ENCODE measurements at regions of chr14 and their contacts with region 1.

Region 1: DNA sequence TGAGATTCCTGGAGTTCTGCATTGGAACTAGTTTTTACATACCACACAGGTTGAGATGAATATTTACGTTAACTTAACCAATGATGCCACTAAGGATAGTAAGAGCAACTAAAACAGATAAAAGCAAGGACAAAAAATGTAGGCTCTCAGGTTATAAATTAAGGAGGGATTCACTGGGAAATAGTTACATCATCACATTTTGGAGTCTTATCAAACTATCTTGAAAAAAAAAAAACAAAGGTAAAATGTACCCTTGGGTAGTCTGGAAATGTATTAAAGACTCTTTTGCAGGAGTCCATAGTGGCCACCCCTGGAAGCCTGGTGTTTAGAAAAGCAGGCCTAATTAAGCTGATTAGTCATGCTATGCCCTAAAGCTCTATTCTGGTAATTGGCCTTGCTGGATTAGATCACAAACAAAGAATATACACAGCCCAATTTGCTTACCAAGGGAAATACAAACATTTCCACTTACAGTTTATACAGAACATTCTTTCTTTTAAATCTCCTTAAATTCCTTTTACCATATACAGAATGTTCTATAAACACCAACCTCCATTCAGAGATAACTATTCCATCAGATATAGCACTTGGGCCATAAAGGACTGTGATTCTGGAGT is 39.3 kb downstream of the SLC25A47 start:
- DNase-seq: no peak
- H3K4me3 ChIP-seq: no peak overlapping the region
- H3K27ac ChIP-seq: no peak overlapping the region
- H3K4me1 ChIP-seq: no peaks in the 10 kb centered on the region
- H3K27me3 ChIP-seq: no peaks in the 10 kb centered on the region
- CTCF ChIP-seq: no peak
- EP300 ChIP-seq: no peak
- POLR2A ChIP-seq: no peak
- RAD21 ChIP-seq: no peak

Region 2: GRCh38 chr14:99968191-99968920 is 394.1 kb before region 1 on chr14:
- CTCF ChIA-PET with region 1: no interaction called
- POLR2A ChIA-PET with region 1: no interaction called
- DNase-seq: no peak
- H3K4me3 ChIP-seq: no peak overlapping the region
- H3K27ac ChIP-seq: no peak overlapping the region
- H3K4me1 ChIP-seq: peaks cover 0 to 12% (median 5%) of the 10 kb centered on the region in 4 experiments; a peak in 6 of 7 replicates
- H3K27me3 ChIP-seq: peaks cover 6 to 22% (median 19%) of the 10 kb centered on the region in 4 experiments
- CTCF ChIP-seq: no peak
- EP300 ChIP-seq: no peak
- POLR2A ChIP-seq: no peak
- RAD21 ChIP-seq: no peak

Region 3: GRCh38 chr14:100341301-100342031 is 21.0 kb before region 1 on chr14:
- CTCF ChIA-PET with region 1: interaction called, 5 read pairs
- POLR2A ChIA-PET with region 1: interaction called, 129 read pairs
- DNase-seq: no peak
- H3K4me3 ChIP-seq: no peak overlapping the region
- H3K27ac ChIP-seq: peak overlapping the region; percentile 34; the same call in 1 of the 2 replicates
- H3K4me1 ChIP-seq: no peaks in the 10 kb centered on the region
- H3K27me3 ChIP-seq: no peaks in the 10 kb centered on the region
- CTCF ChIP-seq: no peak
- EP300 ChIP-seq: no peak
- POLR2A ChIP-seq: no peak
- RAD21 ChIP-seq: no peak

Region 4: GRCh38 chr14:100348784-100349704 is 13.4 kb before region 1 on chr14:
- CTCF ChIA-PET with region 1: interaction called, 13 read pairs
- POLR2A ChIA-PET with region 1: interaction called, 129 read pairs
- DNase-seq: no peak
- H3K4me3 ChIP-seq: no peak overlapping the region
- H3K27ac ChIP-seq: no peak overlapping the region
- H3K4me1 ChIP-seq: no peaks in the 10 kb centered on the region
- H3K27me3 ChIP-seq: no peaks in the 10 kb centered on the region
- CTCF ChIP-seq: no peak
- EP300 ChIP-seq: no peak
- POLR2A ChIP-seq: no peak
- RAD21 ChIP-seq: no peak

Region 5: DNA sequence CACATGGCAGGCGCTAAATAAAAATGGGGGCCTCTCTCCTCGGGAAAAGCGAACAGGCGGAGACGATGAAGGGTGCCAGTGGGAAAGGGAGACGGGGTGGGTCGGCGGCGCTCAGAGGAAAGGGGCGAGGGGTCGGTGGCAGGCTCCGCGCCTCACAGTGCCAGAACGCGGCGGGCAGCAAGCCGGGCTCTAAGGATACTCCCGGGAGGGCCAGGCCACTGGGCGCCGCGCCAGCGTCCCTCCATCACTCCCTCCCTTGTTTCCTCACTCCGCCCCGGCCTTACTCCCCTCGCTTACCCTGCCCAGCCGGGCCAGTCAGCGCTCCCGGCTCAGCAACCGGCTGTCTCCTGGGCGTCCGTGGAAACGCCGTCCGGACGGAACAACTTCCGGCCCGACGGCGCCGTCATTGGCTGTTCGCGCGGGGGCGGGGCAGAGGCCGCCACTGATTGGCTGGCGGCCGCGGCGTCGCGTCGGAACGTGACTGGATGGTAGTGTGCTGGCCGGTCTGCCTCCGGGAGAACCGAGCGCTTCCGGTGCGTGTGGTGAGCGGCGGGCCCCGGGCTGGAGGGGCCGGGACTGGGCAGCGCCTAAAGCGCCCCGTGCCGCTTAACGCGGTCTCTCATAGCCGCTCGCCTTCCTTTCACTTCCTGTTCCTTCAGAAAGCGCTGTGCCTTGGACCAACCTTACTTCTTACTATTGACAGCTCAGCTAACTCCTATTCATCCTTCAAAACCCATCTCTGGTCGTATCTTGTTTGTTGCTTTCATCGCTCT is 13.7 kb after region 1 on chr14:
- CTCF ChIA-PET with region 1: interaction called, 10 read pairs
- POLR2A ChIA-PET with region 1: interaction called, 109 read pairs
- DNase-seq: peak; percentile 89 to 95
- H3K4me3 ChIP-seq: peak within 1 kb of the TSS; percentile 89 to 98 (median 94)
- H3K27ac ChIP-seq: peak within 1 kb of the TSS; percentile 89
- H3K4me1 ChIP-seq: peaks cover 15 to 29% (median 18%) of the 10 kb centered on the region in 4 experiments; a peak in 6 of 7 replicates
- H3K27me3 ChIP-seq: no peaks in the 10 kb centered on the region
- CTCF ChIP-seq: no peak
- EP300 ChIP-seq: no peak
- POLR2A ChIP-seq: peak; percentile 85 to 99
- RAD21 ChIP-seq: no peak

Region 6: GRCh38 chr14:100388103-100388927 is 25.9 kb after region 1 on chr14:
- CTCF ChIA-PET with region 1: no interaction called
- POLR2A ChIA-PET with region 1: no interaction called
- DNase-seq: no peak
- H3K4me3 ChIP-seq: no peak overlapping the region
- H3K27ac ChIP-seq: no peak overlapping the region
- H3K4me1 ChIP-seq: peaks cover 0 to 6% (median under 1%) of the 10 kb centered on the region in 4 experiments; a peak in 2 of 7 replicates
- H3K27me3 ChIP-seq: no peaks in the 10 kb centered on the region
- CTCF ChIP-seq: no peak
- EP300 ChIP-seq: no peak
- POLR2A ChIP-seq: no peak
- RAD21 ChIP-seq: no peak

Region 7: DNA sequence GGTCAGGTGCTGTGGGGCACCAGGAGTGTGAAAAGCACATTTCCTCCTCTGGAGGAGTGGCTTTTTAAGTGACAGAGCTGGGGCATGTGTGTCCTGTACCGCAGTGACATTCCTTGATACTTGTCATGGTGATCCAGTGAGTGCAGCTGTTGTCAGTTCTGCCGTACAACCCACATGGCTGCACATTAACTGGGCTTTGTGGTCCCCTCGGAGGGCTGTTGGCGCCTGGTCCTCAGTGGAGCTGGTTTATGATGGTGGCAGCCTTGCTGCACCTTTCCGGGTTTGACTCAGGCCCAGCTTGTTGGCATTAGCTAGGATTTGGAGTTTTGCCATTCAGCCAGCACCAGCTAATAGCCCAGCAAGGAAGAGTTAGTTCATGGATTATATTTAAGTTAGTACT is 37.7 kb after region 1 on chr14:
- CTCF ChIA-PET with region 1: no interaction called
- POLR2A ChIA-PET with region 1: no interaction called
- DNase-seq: no peak
- H3K4me3 ChIP-seq: no peak overlapping the region
- H3K27ac ChIP-seq: no peak overlapping the region
- H3K4me1 ChIP-seq: peaks cover 3 to 8% (median 7%) of the 10 kb centered on the region in 4 experiments
- H3K27me3 ChIP-seq: no peaks in the 10 kb centered on the region
- CTCF ChIP-seq: no peak
- EP300 ChIP-seq: no peak
- POLR2A ChIP-seq: no peak
- RAD21 ChIP-seq: no peak

Region 8: GRCh38 chr14:100440187-100440631 is 77.8 kb after region 1 on chr14:
- CTCF ChIA-PET with region 1: no interaction called
- POLR2A ChIA-PET with region 1: no interaction called
- DNase-seq: peak; percentile 31 to 75
- H3K4me3 ChIP-seq: no peak overlapping the region
- H3K27ac ChIP-seq: no peak overlapping the region
- H3K4me1 ChIP-seq: peaks cover 0 to 6% (median 4%) of the 10 kb centered on the region in 4 experiments; a peak in 4 of 7 replicates
- H3K27me3 ChIP-seq: no peaks in the 10 kb centered on the region
- CTCF ChIP-seq: peak; percentile 79 to 84 (median 79)
- EP300 ChIP-seq: no peak
- POLR2A ChIP-seq: no peak
- RAD21 ChIP-seq: peak; percentile 91 to 92